Naive thymus-derived CD4-positive, alpha-beta T cell (primary cell): ENCODE measurements at regions of chr12 and their contacts with region 1.

Region 1: DNA sequence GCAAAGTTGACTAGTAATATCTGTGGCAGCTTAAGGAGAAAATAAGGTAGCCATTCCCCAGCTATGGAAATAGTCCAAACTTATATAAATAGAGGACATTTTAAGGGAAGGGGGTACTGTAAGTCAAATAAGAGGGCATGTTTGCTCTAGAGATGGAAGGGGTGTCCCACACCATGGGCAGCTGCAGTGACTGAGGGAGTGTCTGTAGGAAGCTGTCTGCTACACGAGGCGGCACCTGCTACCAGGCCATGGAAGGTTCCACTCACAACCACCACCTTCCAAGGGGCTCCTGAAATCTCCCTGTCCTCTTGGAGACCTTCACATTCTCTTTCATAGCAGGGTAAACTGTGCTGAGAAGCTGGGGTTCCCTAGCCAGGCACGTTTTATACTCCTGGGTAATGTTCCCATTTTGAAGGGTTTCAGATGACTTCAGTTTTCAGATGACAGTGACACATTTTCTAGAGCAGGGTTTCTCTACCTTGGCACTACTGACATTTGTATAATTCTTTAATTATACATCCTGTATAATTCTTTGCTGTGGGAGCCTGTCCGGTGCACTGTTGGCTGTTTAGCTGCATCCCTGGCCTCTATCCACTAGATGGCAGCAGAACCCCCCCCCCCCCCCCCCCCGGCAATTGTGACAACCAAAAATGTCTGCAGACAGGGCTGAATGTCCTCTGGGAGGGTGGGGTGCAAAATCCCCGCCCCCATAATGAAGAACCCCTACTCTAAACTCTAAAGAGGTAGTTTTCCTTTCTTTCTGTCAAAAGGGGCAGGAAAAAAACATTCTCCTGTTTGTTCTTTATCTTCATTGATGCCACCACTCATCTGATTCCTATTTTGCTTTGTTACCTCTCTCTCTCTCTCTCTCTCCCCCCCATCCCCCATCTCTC is 11.6 kb upstream of the SMCO2 start:
- DNase-seq: peak in 6 of 9 donors; percentile 2 to 28 (median 18)
- ATAC-seq: peak; percentile 74
- H3K4me3 ChIP-seq: no peak overlapping the region
- H3K4me3 Mint-ChIP-seq: peak overlapping the region in 1 of 10 donors; percentile 29
- H3K27ac ChIP-seq: no peak overlapping the region
- H3K27ac Mint-ChIP-seq: peak overlapping the region in 3 of 9 donors; percentile 32 to 81 (median 33)
- H3K4me1 ChIP-seq: no peaks in the 10 kb centered on the region
- H3K4me1 Mint-ChIP-seq: peaks cover 7 to 47% (median 10%) of the 10 kb centered on the region in 7 donors
- H3K27me3 ChIP-seq: no peaks in the 10 kb centered on the region
- H3K27me3 Mint-ChIP-seq: peaks cover 0 to 18% (median 13%) of the 10 kb centered on the region in 5 donors

Region 2: GRCh38 chr12:27462151-27462694 is 27.3 kb after region 1 on chr12:
- CTCF ChIA-PET with region 1: no interaction called
- POLR2A ChIA-PET with region 1: interaction called, 3 read pairs
- intact Hi-C with region 1: loop called in 1 of 2 experiments (anchors 1 kb)
- DNase-seq: no peak
- ATAC-seq: no peak
- H3K4me3 ChIP-seq: no peak overlapping the region
- H3K4me3 Mint-ChIP-seq: peak overlapping the region in 2 of 10 donors; percentile 33 to 67
- H3K27ac ChIP-seq: no peak overlapping the region
- H3K27ac Mint-ChIP-seq: peak overlapping the region in 3 of 9 donors; percentile 2 to 64 (median 6)
- H3K4me1 ChIP-seq: no peaks in the 10 kb centered on the region
- H3K4me1 Mint-ChIP-seq: peaks cover 4 to 55% (median 18%) of the 10 kb centered on the region in 7 donors
- H3K27me3 ChIP-seq: no peaks in the 10 kb centered on the region
- H3K27me3 Mint-ChIP-seq: peaks cover 0 to 19% (median 8%) of the 10 kb centered on the region in 5 donors

Region 3: DNA sequence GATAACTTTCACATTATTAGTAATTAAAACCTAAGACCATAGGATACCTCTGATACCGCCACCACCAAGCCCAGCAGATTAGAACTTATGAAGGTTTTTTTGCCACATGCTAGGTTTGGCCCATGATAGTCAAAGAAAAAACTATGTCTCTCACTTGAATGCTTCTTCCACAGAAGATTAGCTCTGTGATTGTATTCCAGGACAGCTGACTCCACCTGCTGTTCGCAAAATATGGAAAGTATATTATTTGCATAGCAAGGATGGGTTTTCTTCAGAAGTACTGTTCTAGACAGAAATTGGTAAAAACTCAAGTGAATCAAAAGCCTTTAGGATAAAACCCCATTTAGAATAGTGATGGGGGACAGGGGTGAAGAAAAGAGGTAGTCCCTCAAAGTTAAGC is 131.2 kb after region 1 on chr12:
- CTCF ChIA-PET with region 1: interaction called, 5 read pairs
- POLR2A ChIA-PET with region 1: no interaction called
- intact Hi-C with region 1: loop called in 1 of 2 experiments (anchors 1 kb)
- DNase-seq: peak in 3 of 9 donors; percentile 1 to 5 (median 1)
- ATAC-seq: no peak
- H3K4me3 ChIP-seq: no peak overlapping the region
- H3K4me3 Mint-ChIP-seq: no peak overlapping the region
- H3K27ac ChIP-seq: no peak overlapping the region
- H3K27ac Mint-ChIP-seq: no peak overlapping the region
- H3K4me1 ChIP-seq: no peaks in the 10 kb centered on the region
- H3K4me1 Mint-ChIP-seq: peaks cover 0 to 4% (median 0%) of the 10 kb centered on the region in 7 donors
- H3K27me3 ChIP-seq: no peaks in the 10 kb centered on the region
- H3K27me3 Mint-ChIP-seq: peaks cover 0 to 3% (median 0%) of the 10 kb centered on the region in 5 donors

Region 4: DNA sequence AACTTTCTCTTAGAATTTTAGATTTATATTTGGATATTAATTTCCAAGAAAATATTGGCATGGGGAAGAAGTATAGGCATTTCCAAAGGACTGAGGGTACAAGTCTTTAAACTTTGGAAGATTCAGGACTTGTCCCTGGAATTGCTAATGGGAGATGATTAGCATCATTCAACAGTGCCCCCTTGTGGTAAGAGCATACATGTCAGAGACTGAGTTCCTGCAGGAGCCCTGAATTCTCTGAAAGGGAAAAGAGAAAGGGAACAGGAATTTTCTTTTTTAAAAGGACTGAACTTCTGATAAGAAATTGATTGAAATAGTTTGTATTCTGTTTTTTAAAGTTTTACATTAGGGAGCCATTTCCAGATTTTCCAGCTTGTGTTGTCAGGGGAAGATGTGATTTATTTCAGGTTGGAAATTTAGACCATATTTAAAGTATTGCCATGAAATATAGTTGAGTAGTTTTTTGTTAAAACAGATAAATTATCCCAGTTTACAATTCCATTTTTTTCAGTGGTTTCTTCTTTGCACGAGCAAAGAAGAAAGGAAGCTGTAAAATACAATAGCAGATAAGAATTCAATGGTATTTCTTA is 217.3 kb after region 1 on chr12:
- CTCF ChIA-PET with region 1: interaction called, 14 read pairs
- POLR2A ChIA-PET with region 1: no interaction called
- intact Hi-C with region 1: loop called (anchors 1 kb)
- DNase-seq: peak in 6 of 9 donors; percentile 26 to 53 (median 32)
- ATAC-seq: peak; percentile 65
- H3K4me3 ChIP-seq: no peak overlapping the region
- H3K4me3 Mint-ChIP-seq: no peak overlapping the region
- H3K27ac ChIP-seq: no peak overlapping the region
- H3K27ac Mint-ChIP-seq: no peak overlapping the region
- H3K4me1 ChIP-seq: no peaks in the 10 kb centered on the region
- H3K4me1 Mint-ChIP-seq: peaks cover 0 to 24% (median 0%) of the 10 kb centered on the region in 7 donors
- H3K27me3 ChIP-seq: no peaks in the 10 kb centered on the region
- H3K27me3 Mint-ChIP-seq: no peaks in the 10 kb centered on the region